Naive thymus-derived CD4-positive, alpha-beta T cell (primary cell): ENCODE measurements at regions of chr7 and their contacts with region 1.

Region 1: DNA sequence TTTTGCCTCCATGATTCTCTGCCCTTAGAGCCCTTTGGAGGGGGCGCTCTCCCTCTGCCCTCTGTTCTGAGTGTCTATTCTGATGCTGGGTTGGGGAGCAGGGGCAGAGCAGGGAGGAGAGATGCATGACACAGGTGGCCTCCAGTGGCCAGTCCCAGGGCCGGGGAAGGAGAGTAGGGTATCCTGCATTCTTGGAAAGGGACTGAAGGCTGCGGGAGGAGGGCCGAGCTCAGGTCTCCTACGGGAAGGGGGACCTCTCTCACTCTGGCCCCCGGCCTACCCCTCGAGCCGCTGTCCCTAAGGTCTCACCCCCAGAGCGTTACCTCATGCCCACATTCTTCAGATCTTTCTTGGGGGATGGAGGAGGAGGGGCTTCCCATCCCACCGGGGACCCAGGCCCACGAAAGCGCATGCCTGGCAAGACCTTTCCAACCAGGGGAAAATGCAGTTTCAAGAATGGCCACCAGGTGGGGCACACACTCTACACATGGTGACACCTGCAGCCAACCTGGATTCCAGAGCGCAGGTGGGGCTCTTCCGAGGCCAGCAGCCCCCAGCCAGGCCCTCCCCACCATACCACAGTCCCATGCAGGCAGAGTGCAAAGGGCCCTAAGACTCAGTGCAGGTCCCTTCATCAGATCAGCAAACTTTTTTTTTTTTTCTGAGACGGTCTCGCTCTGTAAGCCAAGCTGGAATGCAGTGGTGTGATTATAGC is 86.4 kb downstream of the MYL10 start:
- DNase-seq: peak; percentile 36 to 77 (median 61)
- ATAC-seq: peak; percentile 71
- H3K4me3 ChIP-seq: no peak overlapping the region
- H3K4me3 Mint-ChIP-seq: no peak overlapping the region
- H3K27ac ChIP-seq: no peak overlapping the region
- H3K27ac Mint-ChIP-seq: no peak overlapping the region
- H3K4me1 ChIP-seq: no peaks in the 10 kb centered on the region
- H3K4me1 Mint-ChIP-seq: peaks cover 0 to 5% (median 0%) of the 10 kb centered on the region in 7 donors
- H3K27me3 ChIP-seq: no peaks in the 10 kb centered on the region
- H3K27me3 Mint-ChIP-seq: peaks cover 0 to 5% (median 0%) of the 10 kb centered on the region in 5 donors

Region 2: DNA sequence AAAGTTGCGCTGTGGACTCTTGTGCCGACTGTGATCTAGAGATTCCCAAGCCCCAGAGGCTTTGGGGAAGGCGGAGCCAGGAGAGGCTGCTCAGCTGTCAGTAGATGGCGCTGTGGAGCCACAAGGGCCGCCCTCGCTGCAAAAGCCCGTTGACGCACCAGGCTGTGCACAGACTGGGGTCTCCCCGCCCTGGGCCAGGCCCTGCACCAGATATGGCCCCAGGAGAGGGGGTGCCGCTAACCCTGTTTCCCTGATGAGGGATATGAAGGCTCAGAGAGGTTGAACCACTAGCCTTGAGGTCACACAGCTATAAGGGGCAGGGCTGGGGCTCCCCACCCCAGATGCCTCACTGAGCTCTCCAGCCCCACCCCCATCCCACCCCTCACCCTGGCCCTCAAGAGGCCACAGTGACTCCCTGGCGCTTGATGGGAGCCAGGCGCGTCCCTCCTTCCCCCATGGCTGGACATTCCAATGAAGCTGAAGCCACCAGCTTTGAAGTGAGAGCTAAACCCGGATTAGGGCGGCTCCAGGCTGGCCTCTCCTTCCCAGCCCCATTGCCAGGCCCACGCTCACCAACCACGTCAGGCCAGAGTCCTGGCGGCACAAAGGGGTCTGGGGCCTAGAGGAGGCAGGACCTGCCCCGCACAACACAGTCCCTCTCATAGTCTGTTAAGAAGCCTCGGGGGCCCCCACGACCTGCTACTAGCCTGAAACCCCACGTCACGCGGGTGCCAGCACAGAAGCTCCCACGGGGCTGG is 60.0 kb after region 1 on chr7:
- CTCF ChIA-PET with region 1: no interaction called
- POLR2A ChIA-PET with region 1: no interaction called
- intact Hi-C with region 1: loop called (anchors 1 to 2 kb)
- DNase-seq: peak; percentile 32 to 70 (median 60)
- ATAC-seq: peak; percentile 84
- H3K4me3 ChIP-seq: no peak overlapping the region
- H3K4me3 Mint-ChIP-seq: peak overlapping the region in 1 of 10 donors; percentile 23
- H3K27ac ChIP-seq: no peak overlapping the region
- H3K27ac Mint-ChIP-seq: no peak overlapping the region
- H3K4me1 ChIP-seq: no peaks in the 10 kb centered on the region
- H3K4me1 Mint-ChIP-seq: peaks cover 0 to 1% (median 0%) of the 10 kb centered on the region in 7 donors
- H3K27me3 ChIP-seq: no peaks in the 10 kb centered on the region
- H3K27me3 Mint-ChIP-seq: peaks cover 0 to 4% (median 0%) of the 10 kb centered on the region in 5 donors

Region 3: GRCh38 chr7:102236592-102237287 is 694.1 kb after region 1 on chr7:
- CTCF ChIA-PET with region 1: interaction called, 6 read pairs
- POLR2A ChIA-PET with region 1: no interaction called
- intact Hi-C with region 1: loop called in 1 of 2 experiments (anchors 1 kb)
- DNase-seq: peak in 8 of 9 donors; percentile 5 to 57 (median 32)
- ATAC-seq: peak; percentile 61
- H3K4me3 ChIP-seq: no peak overlapping the region
- H3K4me3 Mint-ChIP-seq: no peak overlapping the region
- H3K27ac ChIP-seq: no peak overlapping the region
- H3K27ac Mint-ChIP-seq: no peak overlapping the region
- H3K4me1 ChIP-seq: no peaks in the 10 kb centered on the region
- H3K4me1 Mint-ChIP-seq: peaks cover 0 to 4% (median 0%) of the 10 kb centered on the region in 7 donors
- H3K27me3 ChIP-seq: no peaks in the 10 kb centered on the region
- H3K27me3 Mint-ChIP-seq: no peaks in the 10 kb centered on the region

Region 4: GRCh38 chr7:102272075-102272917 is 729.6 kb after region 1 on chr7:
- CTCF ChIA-PET with region 1: interaction called, 29 read pairs
- POLR2A ChIA-PET with region 1: no interaction called
- intact Hi-C with region 1: no loop called
- DNase-seq: peak; percentile 34 to 78 (median 69)
- ATAC-seq: peak; percentile 83
- H3K4me3 ChIP-seq: no peak overlapping the region
- H3K4me3 Mint-ChIP-seq: no peak overlapping the region
- H3K27ac ChIP-seq: no peak overlapping the region
- H3K27ac Mint-ChIP-seq: no peak overlapping the region
- H3K4me1 ChIP-seq: no peaks in the 10 kb centered on the region
- H3K4me1 Mint-ChIP-seq: peaks cover 0 to 4% (median 0%) of the 10 kb centered on the region in 7 donors
- H3K27me3 ChIP-seq: no peaks in the 10 kb centered on the region
- H3K27me3 Mint-ChIP-seq: no peaks in the 10 kb centered on the region

Region 5: DNA sequence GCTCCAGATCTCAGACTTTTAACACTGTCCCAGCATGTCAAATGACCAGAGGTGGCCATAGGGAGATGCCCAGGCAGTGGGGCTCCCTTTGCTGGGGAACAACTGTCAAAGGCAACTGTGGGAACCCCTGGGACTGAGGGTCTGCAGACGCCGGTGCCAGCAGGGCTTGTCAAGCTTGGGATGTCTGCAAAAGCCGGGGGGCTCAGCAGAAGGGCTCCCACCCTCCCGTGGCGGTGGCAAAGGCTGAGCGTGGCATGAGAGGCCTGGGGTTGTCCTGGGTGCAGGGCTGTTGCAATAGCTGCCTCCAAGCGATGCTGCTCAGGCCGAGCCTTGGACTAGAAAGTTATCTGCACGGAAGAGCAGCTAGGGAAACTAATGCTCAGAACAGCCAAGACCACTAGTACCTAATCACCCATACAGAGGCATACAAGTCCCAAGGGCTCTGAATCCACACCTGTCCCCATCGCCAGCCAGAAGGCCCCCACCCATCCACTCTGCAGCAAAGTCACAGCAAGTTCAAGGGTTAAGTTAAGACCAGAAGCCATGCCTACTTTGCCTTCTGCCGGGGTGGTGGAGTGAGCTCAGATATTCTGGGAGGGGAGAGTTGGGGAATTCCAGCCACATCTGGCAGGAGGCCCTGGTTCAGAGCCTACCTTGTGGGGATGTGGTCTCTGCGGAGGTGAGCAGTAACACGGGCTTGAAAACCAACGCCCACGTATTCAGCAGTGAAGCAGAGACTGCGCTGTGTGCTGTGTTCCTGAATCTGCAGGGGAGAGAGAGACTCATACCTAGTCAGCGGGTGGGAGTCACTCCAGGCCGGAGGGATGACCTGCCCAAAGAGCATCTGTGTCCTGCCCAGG is 748.6 kb after region 1 on chr7:
- CTCF ChIA-PET with region 1: no interaction called
- POLR2A ChIA-PET with region 1: no interaction called
- intact Hi-C with region 1: no loop called
- DNase-seq: peak in 5 of 9 donors; percentile 23 to 51 (median 37)
- ATAC-seq: peak; percentile 51
- H3K4me3 ChIP-seq: no peak overlapping the region
- H3K4me3 Mint-ChIP-seq: peak overlapping the region in 8 of 10 donors; percentile 24 to 82 (median 45)
- H3K27ac ChIP-seq: no peak overlapping the region
- H3K27ac Mint-ChIP-seq: peak overlapping the region in 2 of 9 donors; percentile 14
- H3K4me1 ChIP-seq: peaks cover 11 to 13% of the 10 kb centered on the region in 2 donors
- H3K4me1 Mint-ChIP-seq: peaks cover 9 to 29% (median 23%) of the 10 kb centered on the region in 7 donors
- H3K27me3 ChIP-seq: no peaks in the 10 kb centered on the region
- H3K27me3 Mint-ChIP-seq: peaks cover 0 to 5% (median 0%) of the 10 kb centered on the region in 5 donors

Region 6: GRCh38 chr7:102390697-102391484 is 848.2 kb after region 1 on chr7:
- CTCF ChIA-PET with region 1: interaction called, 3 read pairs
- POLR2A ChIA-PET with region 1: no interaction called
- intact Hi-C with region 1: loop called in 1 of 2 experiments (anchors 5 kb)
- DNase-seq: peak; percentile 37 to 72 (median 60)
- ATAC-seq: peak; percentile 84
- H3K4me3 ChIP-seq: no peak overlapping the region
- H3K4me3 Mint-ChIP-seq: no peak overlapping the region
- H3K27ac ChIP-seq: no peak overlapping the region
- H3K27ac Mint-ChIP-seq: no peak overlapping the region
- H3K4me1 ChIP-seq: peaks cover 0 to 6% of the 10 kb centered on the region in 2 donors
- H3K4me1 Mint-ChIP-seq: peaks cover 5 to 7% (median 6%) of the 10 kb centered on the region in 7 donors
- H3K27me3 ChIP-seq: no peaks in the 10 kb centered on the region
- H3K27me3 Mint-ChIP-seq: no peaks in the 10 kb centered on the region